Left colon (tissue), 2 donors: ENCODE measurements at regions of chr3 and their contacts with region 1.

Region 1: DNA sequence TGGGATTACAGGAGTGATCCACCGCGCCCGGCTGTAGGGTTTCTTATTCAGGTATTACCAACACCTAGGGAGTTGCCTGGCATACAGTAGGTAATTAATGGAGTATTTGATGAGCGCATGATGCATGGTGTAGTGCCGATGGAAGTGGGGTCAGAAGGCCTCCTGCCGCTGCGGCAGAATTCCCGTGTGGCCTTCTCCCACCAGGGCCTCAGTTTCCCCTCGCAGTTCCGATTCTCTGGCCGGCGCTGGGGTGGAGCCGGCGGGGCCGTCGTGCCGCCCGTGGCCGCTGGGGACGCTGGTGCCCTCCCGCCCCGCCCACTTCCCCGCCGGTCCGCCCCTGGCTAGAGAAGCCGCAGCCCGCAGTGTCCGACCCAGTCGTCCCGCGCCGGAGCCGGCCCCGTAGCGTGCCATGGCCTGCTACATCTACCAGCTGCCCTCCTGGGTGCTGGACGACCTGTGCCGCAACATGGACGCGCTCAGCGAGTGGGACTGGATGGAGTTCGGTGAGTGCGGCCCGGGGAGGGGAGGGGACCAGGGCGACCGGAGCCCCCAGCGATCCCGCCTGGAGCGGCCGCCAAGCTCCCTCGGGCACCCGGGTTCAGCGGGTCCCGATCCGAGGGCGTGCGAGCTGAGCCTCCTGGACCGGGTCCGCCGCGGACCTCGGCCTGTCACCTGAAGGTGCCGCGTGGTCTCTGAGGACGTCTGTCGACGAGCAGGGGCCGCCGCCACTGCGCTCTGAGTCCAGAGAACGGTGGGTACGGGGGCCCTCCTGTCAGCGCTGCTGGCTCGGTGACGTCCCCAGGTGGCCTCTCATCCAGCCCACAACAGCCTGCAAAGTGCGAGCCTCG is at the start of gene IRAK2:
- DNase-seq: peak; percentile 57 to 76
- ATAC-seq: peak; percentile 96
- total RNA-seq, gene IRAK2: 1.7 to 3.4 TPM

Region 2: DNA sequence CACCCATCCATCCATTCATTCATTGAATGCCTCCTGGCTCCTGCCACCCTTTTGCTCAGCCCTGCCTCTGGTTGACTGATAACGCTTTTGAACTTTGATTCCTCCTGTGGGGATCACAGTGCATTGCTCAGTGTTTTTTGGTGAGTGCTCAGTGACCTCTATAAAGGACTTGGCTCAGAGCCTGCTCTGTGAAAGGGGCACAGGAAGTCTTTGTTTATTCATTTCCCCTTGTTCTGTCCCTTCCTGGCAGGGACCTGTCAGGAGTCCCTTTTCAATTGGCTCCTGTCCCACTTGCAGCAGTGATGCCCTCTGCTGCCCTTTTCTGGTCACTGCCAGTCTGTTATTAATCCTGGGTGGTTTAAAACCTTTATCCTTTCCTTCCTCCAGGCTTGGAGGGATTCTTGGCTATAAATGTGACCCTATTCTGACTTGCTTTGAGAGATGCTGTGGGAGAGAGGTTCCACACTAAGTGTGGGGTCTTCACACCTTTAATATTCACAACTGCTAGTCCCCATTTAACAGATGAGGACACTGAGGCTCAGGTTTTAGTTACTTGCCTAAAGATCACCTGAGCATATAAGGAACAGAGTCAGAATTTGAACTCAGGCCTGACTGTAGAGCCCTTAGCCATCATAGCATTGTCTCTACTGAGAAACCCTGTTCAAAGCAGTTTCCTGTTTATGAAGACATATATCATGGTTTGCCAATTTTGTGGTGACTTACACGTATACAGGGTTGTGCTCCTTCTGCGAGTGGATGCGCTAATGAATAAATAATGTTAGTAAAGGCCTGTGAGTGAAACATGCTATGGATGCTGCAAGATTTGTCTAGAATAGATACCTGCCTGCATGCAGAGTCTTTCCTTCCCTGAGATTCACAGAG is 60.3 kb after region 1 on chr3:
- intact Hi-C with region 1: loop called in 1 of 2 experiments (anchors 2 kb)
- DNase-seq: peak; percentile 73
- ATAC-seq: peak; percentile 88